Dendritic cell treated with granulocyte-macrophage colony-stimulating factor and Interleukin-4, amounts not matched to agents 40 ng/mL and 50 ng/mL, for 4 days (primary cell): ENCODE measurements at regions of chr21 and their contacts with region 1.

Region 1: GRCh38 chr21:36927719-36928117 is 38.8 kb downstream of the HLCS start:
- H3K4me3 Mint-ChIP-seq: no peak overlapping the region
- H3K27ac Mint-ChIP-seq: no peak overlapping the region
- H3K4me1 Mint-ChIP-seq: peaks cover 5% of the 10 kb centered on the region
- H3K27me3 Mint-ChIP-seq: no peaks in the 10 kb centered on the region

Region 2: GRCh38 chr21:36218691-36219090 is 709.0 kb before region 1 on chr21:
- intact Hi-C with region 1: no loop called
- H3K4me3 Mint-ChIP-seq: no peak overlapping the region
- H3K27ac Mint-ChIP-seq: no peak overlapping the region
- H3K4me1 Mint-ChIP-seq: no peaks in the 10 kb centered on the region
- H3K27me3 Mint-ChIP-seq: no peaks in the 10 kb centered on the region

Region 3: DNA sequence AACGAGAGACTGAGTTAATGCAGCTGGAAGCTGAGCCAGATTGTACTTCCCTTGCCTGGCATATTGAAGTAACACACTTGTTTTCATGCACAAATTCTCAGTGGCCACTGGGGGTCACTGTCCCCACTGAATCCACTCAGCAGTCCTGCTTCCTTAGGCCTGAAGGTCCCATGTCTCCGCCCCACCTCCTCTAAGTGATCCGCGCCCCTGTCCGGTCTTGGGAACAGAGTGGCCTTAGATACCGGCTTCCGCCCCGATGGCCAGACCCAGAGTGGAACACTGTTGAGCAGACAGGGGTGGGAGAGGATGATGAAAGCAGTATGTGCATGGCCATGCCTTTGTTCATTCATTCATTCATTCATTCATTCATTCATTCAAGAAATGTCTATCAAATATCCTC is 507.7 kb before region 1 on chr21:
- intact Hi-C with region 1: loop called (anchors 1 kb)
- H3K4me3 Mint-ChIP-seq: no peak overlapping the region
- H3K27ac Mint-ChIP-seq: no peak overlapping the region
- H3K4me1 Mint-ChIP-seq: peaks cover 25% of the 10 kb centered on the region
- H3K27me3 Mint-ChIP-seq: no peaks in the 10 kb centered on the region

Region 4: GRCh38 chr21:36504067-36505058 is 423.4 kb before region 1 on chr21:
- intact Hi-C with region 1: loop called (anchors 2 kb)
- H3K4me3 Mint-ChIP-seq: no peak overlapping the region
- H3K27ac Mint-ChIP-seq: no peak overlapping the region
- H3K4me1 Mint-ChIP-seq: no peaks in the 10 kb centered on the region
- H3K27me3 Mint-ChIP-seq: peaks cover 5% of the 10 kb centered on the region

Region 5: GRCh38 chr21:36630485-36631206 is 297.1 kb before region 1 on chr21:
- intact Hi-C with region 1: loop called (anchors 1 kb)
- H3K4me3 Mint-ChIP-seq: no peak overlapping the region
- H3K27ac Mint-ChIP-seq: no peak overlapping the region
- H3K4me1 Mint-ChIP-seq: no peaks in the 10 kb centered on the region
- H3K27me3 Mint-ChIP-seq: peaks cover 10% of the 10 kb centered on the region

Region 6: GRCh38 chr21:36747815-36748383 is 179.8 kb before region 1 on chr21:
- intact Hi-C with region 1: loop called (anchors 5 kb)
- H3K4me3 Mint-ChIP-seq: no peak overlapping the region
- H3K27ac Mint-ChIP-seq: no peak overlapping the region
- H3K4me1 Mint-ChIP-seq: no peaks in the 10 kb centered on the region
- H3K27me3 Mint-ChIP-seq: peaks cover 72% of the 10 kb centered on the region

Region 7: GRCh38 chr21:36759348-36760083 is 168.2 kb before region 1 on chr21:
- intact Hi-C with region 1: no loop called
- H3K4me3 Mint-ChIP-seq: no peak overlapping the region
- H3K27ac Mint-ChIP-seq: no peak overlapping the region
- H3K4me1 Mint-ChIP-seq: no peaks in the 10 kb centered on the region
- H3K27me3 Mint-ChIP-seq: no peaks in the 10 kb centered on the region